ENCODE measurements at regions of chr15 and their contacts with region 1.

Region 1: GRCh38 chr15:67531379-67532059 is 10.6 kb downstream of the C15orf61 start:
- DNase-seq: no peak
- ATAC-seq: no peak
- H3K4me3 ChIP-seq: no peak overlapping the region
- H3K4me3 Mint-ChIP-seq: no peak overlapping the region
- H3K27ac ChIP-seq: no peak overlapping the region
- H3K27ac Mint-ChIP-seq: no peak overlapping the region
- H3K4me1 ChIP-seq: no peaks in the 10 kb centered on the region
- H3K4me1 Mint-ChIP-seq: no peaks in the 10 kb centered on the region
- H3K27me3 ChIP-seq: no peaks in the 10 kb centered on the region
- H3K27me3 Mint-ChIP-seq: no peaks in the 10 kb centered on the region

Region 2: GRCh38 chr15:67542420-67543347 is 11.2 kb after region 1 on chr15 and contains the start of gene MAP2K5:
- CTCF ChIA-PET with region 1: no interaction called
- POLR2A ChIA-PET with region 1: interaction called in 1 of 2 experiments, 11 read pairs
- DNase-seq: peak; percentile 58 to 89 (median 76)
- ATAC-seq: peak; percentile 84 to 90 (median 86)
- H3K4me3 ChIP-seq: peak within 1 kb of the TSS; percentile 76 to 97
- H3K4me3 Mint-ChIP-seq: peak within 1 kb of the TSS; percentile 95 to 98 (median 97)
- H3K27ac ChIP-seq: peak within 1 kb of the TSS; percentile 88
- H3K27ac Mint-ChIP-seq: peak within 1 kb of the TSS; percentile 99
- H3K4me1 ChIP-seq: peaks cover 10 to 20% of the 10 kb centered on the region in 2 experiments
- H3K4me1 Mint-ChIP-seq: peaks cover 47 to 66% (median 57%) of the 10 kb centered on the region in 3 donors
- H3K27me3 ChIP-seq: no peaks in the 10 kb centered on the region
- H3K27me3 Mint-ChIP-seq: no peaks in the 10 kb centered on the region
- total RNA-seq, gene MAP2K5: 24.5 to 35.5 (median 28.5) TPM

Region 3: DNA sequence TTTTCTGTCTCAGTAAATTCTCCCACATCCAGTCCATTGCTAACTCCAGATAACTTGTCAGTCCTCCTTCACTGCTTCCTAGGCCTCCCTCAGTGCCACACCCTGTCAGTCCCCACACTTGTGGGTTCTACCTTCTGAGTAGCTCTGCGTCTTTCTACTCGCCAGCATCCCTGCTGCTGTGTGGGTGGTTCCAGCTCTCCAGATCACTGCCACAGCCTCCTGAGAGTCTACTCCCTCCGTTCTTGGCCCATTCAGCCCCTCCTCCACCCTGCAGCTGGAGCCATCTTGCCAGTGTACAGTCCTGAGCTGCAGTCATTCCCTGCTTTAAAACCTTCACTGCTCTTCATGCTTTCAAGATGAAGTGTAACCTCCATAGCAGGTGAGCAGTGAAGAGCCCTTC is 56.2 kb after region 1 on chr15:
- CTCF ChIA-PET with region 1: no interaction called
- POLR2A ChIA-PET with region 1: no interaction called
- DNase-seq: no peak
- ATAC-seq: no peak
- H3K4me3 ChIP-seq: no peak overlapping the region
- H3K4me3 Mint-ChIP-seq: no peak overlapping the region
- H3K27ac ChIP-seq: no peak overlapping the region
- H3K27ac Mint-ChIP-seq: no peak overlapping the region
- H3K4me1 ChIP-seq: no peaks in the 10 kb centered on the region
- H3K4me1 Mint-ChIP-seq: peaks cover 0 to 12% (median 0%) of the 10 kb centered on the region in 3 donors
- H3K27me3 ChIP-seq: no peaks in the 10 kb centered on the region
- H3K27me3 Mint-ChIP-seq: no peaks in the 10 kb centered on the region

Measured in T-cell (primary cell).